ENCODE measurements at regions of chr2 and their contacts with region 1.

Region 1: DNA sequence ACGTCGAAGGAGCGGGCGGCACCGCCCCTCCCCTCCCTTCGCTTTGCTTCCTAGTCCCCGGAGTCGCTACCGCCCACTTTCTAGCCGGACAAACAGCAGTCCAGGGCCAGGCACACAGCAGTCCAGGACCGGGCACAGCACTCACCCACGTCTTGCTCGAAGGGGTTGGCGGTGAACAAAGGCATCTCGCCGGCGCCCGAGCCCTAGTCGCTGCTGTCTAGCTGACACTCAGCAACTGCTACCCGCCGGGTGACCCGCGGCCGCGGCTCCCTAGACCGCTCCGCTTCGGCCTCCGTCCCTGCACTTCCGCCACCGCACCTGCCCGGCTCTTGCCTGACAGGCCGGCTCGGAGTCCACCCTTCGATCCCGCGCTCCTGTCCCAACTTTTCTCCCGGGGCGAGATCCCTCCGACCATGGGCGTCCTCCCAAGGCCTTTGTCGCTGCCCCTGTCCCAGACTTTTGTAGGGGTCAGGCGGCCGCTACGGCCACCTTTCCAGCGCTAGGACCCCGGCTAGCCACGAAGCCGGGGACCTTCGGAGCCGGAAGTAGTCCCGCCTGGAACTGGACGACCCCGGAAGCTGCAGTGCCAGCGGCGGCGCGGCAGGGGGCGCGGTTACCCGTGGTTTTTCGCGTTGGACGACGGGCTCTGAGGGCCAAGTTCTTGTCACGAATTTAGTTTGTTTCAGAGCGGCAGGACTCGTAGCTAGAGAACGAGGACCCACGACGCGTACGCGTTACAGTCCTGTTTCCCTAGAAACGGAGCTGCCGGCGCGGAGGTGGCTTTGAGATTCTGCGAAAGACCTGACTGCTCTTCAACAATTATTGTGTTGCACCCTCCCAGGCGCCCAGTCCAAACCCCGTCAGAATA is at the start of gene STAM2:
- DNase-seq: peak; percentile 79 to 95 (median 93)
- ATAC-seq: peak; percentile 93
- H3K4me3 ChIP-seq: peak within 1 kb of the TSS; percentile 80
- H3K4me3 Mint-ChIP-seq: peak within 1 kb of the TSS; percentile 90 to 99 (median 96)
- H3K27ac ChIP-seq: peak within 1 kb of the TSS; percentile 91
- H3K27ac Mint-ChIP-seq: peak within 1 kb of the TSS; percentile 96 to 99 (median 99)
- H3K4me1 ChIP-seq: peaks cover 0 to 14% of the 10 kb centered on the region in 2 donors
- H3K4me1 Mint-ChIP-seq: peaks cover 22 to 46% (median 36%) of the 10 kb centered on the region in 7 donors
- H3K27me3 ChIP-seq: no peaks in the 10 kb centered on the region
- H3K27me3 Mint-ChIP-seq: peaks cover 0 to 7% (median 2%) of the 10 kb centered on the region in 5 donors
- total RNA-seq, gene STAM2: 12.6 to 22.2 (median 20.0) TPM

Region 2: DNA sequence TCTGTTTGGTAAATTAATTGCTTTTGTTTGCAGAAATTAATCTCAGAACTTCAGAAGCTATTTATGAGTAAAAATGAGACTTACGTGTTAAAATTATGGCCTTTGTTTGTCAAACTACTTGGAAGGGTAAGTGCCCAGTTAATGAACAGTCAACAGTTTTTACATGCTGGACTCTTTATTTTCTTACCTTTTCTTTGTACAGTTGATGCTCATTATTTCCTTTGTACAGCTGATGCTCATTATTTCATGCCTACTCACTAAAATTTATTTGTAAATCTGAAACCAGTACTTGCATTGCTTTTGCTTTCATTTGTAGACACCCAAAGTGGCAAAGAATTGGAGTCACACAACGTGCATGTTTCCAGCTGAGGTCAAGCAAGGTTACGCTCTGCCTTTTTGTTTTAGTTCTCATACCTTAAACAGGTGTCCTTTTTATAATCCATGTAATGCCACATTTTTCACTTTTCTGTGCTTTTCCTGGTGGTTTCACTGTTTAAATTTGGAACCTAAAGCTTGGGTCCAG is 752.7 kb before region 1 on chr2:
- CTCF ChIA-PET with region 1: no interaction called
- POLR2A ChIA-PET with region 1: no interaction called
- intact Hi-C with region 1: loop called in 1 of 2 experiments (anchors 10 kb)
- DNase-seq: no peak
- ATAC-seq: no peak
- H3K4me3 ChIP-seq: no peak overlapping the region
- H3K4me3 Mint-ChIP-seq: peak overlapping the region in 5 of 10 donors; percentile 45 to 63 (median 59)
- H3K27ac ChIP-seq: peak overlapping the region; percentile 53
- H3K27ac Mint-ChIP-seq: peak overlapping the region; percentile 51 to 98 (median 91)
- H3K4me1 ChIP-seq: peaks cover 17 to 20% of the 10 kb centered on the region in 2 donors
- H3K4me1 Mint-ChIP-seq: peaks cover 14 to 49% (median 44%) of the 10 kb centered on the region in 7 donors
- H3K27me3 ChIP-seq: no peaks in the 10 kb centered on the region
- H3K27me3 Mint-ChIP-seq: no peaks in the 10 kb centered on the region

Region 3: GRCh38 chr2:151973901-151974199 is 201.8 kb before region 1 on chr2:
- CTCF ChIA-PET with region 1: no interaction called
- POLR2A ChIA-PET with region 1: no interaction called
- intact Hi-C with region 1: no loop called
- DNase-seq: peak in 1 of 9 donors; percentile 1
- ATAC-seq: no peak
- H3K4me3 ChIP-seq: no peak overlapping the region
- H3K4me3 Mint-ChIP-seq: no peak overlapping the region
- H3K27ac ChIP-seq: no peak overlapping the region
- H3K27ac Mint-ChIP-seq: no peak overlapping the region
- H3K4me1 ChIP-seq: no peaks in the 10 kb centered on the region
- H3K4me1 Mint-ChIP-seq: peaks cover 0 to 9% (median 0%) of the 10 kb centered on the region in 7 donors
- H3K27me3 ChIP-seq: no peaks in the 10 kb centered on the region
- H3K27me3 Mint-ChIP-seq: peaks cover 0 to 14% (median 5%) of the 10 kb centered on the region in 5 donors

Region 4: DNA sequence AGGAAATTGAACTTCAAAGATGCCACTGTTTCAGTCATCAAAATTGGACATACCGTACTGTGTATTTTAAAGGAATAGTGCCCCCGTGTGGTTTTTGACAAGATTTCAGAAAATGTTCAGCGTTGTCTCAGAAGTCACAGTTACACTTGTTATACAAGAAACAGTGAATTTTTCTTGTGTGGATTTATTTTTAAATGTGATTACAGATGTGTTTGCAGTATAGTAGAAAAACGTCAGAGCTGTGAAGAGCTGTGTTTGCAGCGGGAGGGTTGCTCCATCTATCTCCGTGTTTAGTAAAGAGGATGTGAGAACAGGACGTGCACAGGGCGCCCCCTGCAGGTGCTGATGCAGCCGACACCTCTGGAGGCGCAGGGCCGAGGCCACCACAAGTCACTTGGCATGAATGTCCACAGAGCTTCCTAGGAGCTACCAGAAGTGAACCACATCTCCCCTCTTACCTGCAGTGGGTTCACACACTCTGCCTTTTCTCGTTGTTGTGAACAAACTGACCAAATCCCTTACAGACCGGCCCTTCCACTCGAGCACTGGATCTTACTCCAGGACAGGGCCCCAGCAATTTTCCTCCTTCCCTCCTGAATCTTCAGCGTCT is 149.9 kb before region 1 on chr2:
- CTCF ChIA-PET with region 1: no interaction called
- POLR2A ChIA-PET with region 1: no interaction called
- intact Hi-C with region 1: loop called in 1 of 2 experiments (anchors 5 kb)
- DNase-seq: peak; percentile 50 to 81 (median 76)
- ATAC-seq: peak; percentile 94
- H3K4me3 ChIP-seq: peak overlapping the region; percentile 54
- H3K4me3 Mint-ChIP-seq: peak overlapping the region; percentile 3 to 95 (median 82)
- H3K27ac ChIP-seq: no peak overlapping the region
- H3K27ac Mint-ChIP-seq: peak overlapping the region in 4 of 9 donors; percentile 13 to 58 (median 24)
- H3K4me1 ChIP-seq: no peaks in the 10 kb centered on the region
- H3K4me1 Mint-ChIP-seq: peaks cover 0 to 12% (median 10%) of the 10 kb centered on the region in 7 donors
- H3K27me3 ChIP-seq: no peaks in the 10 kb centered on the region
- H3K27me3 Mint-ChIP-seq: peaks cover 0 to 14% (median 0%) of the 10 kb centered on the region in 5 donors

Region 5: GRCh38 chr2:152335010-152335725 is 159.5 kb after region 1 on chr2 and contains the start of gene FMNL2:
- CTCF ChIA-PET with region 1: no interaction called
- POLR2A ChIA-PET with region 1: no interaction called
- intact Hi-C with region 1: loop called (anchors 1 to 10 kb)
- DNase-seq: peak in 6 of 9 donors; percentile 2 to 74 (median 24)
- ATAC-seq: peak; percentile 77
- H3K4me3 ChIP-seq: peak within 1 kb of the TSS; percentile 24
- H3K4me3 Mint-ChIP-seq: peak within 1 kb of the TSS; percentile 72 to 93 (median 86)
- H3K27ac ChIP-seq: no peak within 1 kb of the TSS
- H3K27ac Mint-ChIP-seq: no peak within 1 kb of the TSS
- H3K4me1 ChIP-seq: no peaks in the 10 kb centered on the region
- H3K4me1 Mint-ChIP-seq: peaks cover 5 to 20% (median 14%) of the 10 kb centered on the region in 7 donors
- H3K27me3 ChIP-seq: peaks cover 0 to 8% of the 10 kb centered on the region in 2 donors
- H3K27me3 Mint-ChIP-seq: peaks cover 55 to 70% (median 59%) of the 10 kb centered on the region in 5 donors
- total RNA-seq, gene FMNL2: 0.66 to 2.7 (median 1.7) TPM

Region 6: GRCh38 chr2:152657043-152657442 is 481.4 kb after region 1 on chr2:
- CTCF ChIA-PET with region 1: no interaction called
- POLR2A ChIA-PET with region 1: no interaction called
- intact Hi-C with region 1: loop called in 1 of 2 experiments (anchors 5 kb)
- DNase-seq: no peak
- ATAC-seq: no peak
- H3K4me3 ChIP-seq: no peak overlapping the region
- H3K4me3 Mint-ChIP-seq: no peak overlapping the region
- H3K27ac ChIP-seq: no peak overlapping the region
- H3K27ac Mint-ChIP-seq: peak overlapping the region in 5 of 9 donors; percentile 10 to 70 (median 19)
- H3K4me1 ChIP-seq: no peaks in the 10 kb centered on the region
- H3K4me1 Mint-ChIP-seq: peaks cover 0 to 4% (median 0%) of the 10 kb centered on the region in 7 donors
- H3K27me3 ChIP-seq: no peaks in the 10 kb centered on the region
- H3K27me3 Mint-ChIP-seq: no peaks in the 10 kb centered on the region

Region 7: DNA sequence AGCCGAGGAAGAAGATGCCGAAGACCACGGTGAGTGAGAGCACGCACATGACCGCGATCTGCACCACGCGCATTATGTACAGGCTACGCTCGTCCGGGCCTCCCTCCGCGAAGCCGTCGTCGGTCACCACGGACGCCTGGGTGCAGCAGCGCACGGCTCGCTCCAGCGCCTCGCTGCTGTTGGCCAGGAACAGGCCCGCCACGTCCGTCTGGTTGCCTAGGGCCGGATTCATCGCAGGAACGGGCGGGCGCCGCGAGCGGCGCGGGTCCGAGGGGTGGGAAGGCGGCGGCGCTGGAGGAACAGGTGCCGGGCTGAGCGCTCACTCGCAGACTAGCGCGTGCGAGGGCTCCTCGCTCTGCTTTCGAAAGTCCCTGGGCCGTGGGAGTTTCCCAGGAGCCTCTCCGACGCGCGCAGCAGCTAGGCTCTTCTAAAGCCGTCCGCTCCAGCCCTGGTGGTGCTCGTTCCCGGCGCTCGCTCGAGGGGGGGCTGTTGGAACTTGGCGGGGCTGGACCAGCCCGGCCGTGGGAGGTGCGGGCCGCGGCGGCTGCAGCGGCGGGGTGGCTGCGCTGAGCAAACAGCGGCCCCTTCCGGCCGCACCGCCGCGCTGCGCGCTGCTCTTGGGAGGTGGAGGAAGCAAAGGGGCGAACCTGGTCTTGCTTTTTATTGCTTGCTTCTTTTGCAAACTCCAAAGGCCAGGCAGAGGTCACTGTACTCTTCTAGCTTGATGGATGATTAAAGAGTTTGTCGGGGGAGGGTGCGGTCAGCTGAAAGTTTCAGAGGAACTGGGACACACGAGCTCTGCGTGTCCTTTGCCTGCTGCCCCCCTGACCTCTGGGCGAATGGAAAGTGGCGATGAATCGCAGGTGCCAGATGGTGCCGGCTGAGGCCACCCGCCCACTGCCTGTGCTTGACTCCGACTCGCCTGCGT is 1302.9 kb after region 1 on chr2 and contains the start of gene RPRM:
- CTCF ChIA-PET with region 1: no interaction called
- POLR2A ChIA-PET with region 1: no interaction called
- intact Hi-C with region 1: loop called (anchors 1 to 5 kb)
- DNase-seq: peak; percentile 25 to 66 (median 47)
- ATAC-seq: peak; percentile 88
- H3K4me3 ChIP-seq: peak within 1 kb of the TSS; percentile 38
- H3K4me3 Mint-ChIP-seq: peak within 1 kb of the TSS; percentile 62 to 87 (median 81)
- H3K27ac ChIP-seq: no peak within 1 kb of the TSS
- H3K27ac Mint-ChIP-seq: no peak within 1 kb of the TSS
- H3K4me1 ChIP-seq: peaks cover 0 to 9% of the 10 kb centered on the region in 2 donors
- H3K4me1 Mint-ChIP-seq: peaks cover 9 to 26% (median 18%) of the 10 kb centered on the region in 7 donors
- H3K27me3 ChIP-seq: peaks cover 0 to 24% of the 10 kb centered on the region in 2 donors
- H3K27me3 Mint-ChIP-seq: peaks cover 63 to 83% (median 72%) of the 10 kb centered on the region in 5 donors
- total RNA-seq, gene RPRM: 0.15 to 0.76 (median 0.24) TPM in 3 of 5 experiments, not detected in the others